K562 (cell line): ENCODE measurements at regions of chr3 and their contacts with region 1.

Region 1: GRCh38 chr3:149129326-149130205 is at the start of gene HPS3:
- DNase-seq: peak; percentile 89 to 94 (median 90)
- ATAC-seq: peak; percentile 98
- H3K4me3 ChIP-seq: peak within 1 kb of the TSS; percentile 77
- H3K27ac ChIP-seq: peak within 1 kb of the TSS; percentile 20
- H3K4me1 ChIP-seq: peaks cover 5 to 12% of the 10 kb centered on the region in 2 experiments; a peak in 3 of 5 replicates
- H3K27me3 ChIP-seq: peaks cover 0 to 13% of the 10 kb centered on the region in 2 experiments; a peak in 3 of 5 replicates
- CTCF ChIP-seq: no peak
- EP300 ChIP-seq: no peak
- POLR2A ChIP-seq: peak; percentile 80
- RAD21 ChIP-seq: no peak
- polyA plus RNA-seq, gene HPS3: 1.2 to 2.1 TPM

Region 2: DNA sequence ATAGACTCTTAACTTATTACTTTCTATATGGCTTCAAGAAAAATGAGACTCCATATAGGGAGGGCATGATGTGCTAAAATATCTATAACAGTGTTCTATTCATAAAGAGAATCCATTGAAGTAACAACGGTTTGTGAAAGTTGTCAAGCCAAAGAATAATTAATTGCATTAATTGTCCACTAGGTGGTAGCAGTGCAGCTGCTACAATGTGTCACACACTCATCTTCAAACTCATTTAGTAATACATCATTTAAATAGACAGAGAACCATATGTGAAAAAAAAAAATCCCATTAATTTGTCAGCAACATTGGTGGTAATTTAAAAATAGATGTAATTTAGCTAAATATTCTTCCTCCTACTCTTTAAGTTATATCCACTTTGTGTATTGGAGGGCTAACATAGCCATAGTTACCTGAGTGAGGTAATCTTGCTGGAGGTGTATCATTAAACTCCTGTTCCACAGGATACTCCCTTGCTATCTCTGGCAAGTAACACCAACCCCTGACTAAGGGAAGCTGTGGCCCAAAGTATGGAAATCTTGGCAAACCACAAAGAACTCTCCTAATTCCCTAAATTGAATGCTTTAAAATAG is 268.2 kb before region 1 on chr3:
- CTCF ChIA-PET with region 1: no interaction called
- POLR2A ChIA-PET with region 1: no interaction called
- in situ Hi-C with region 1: no loop called
- intact Hi-C with region 1: loop called (anchors 10 kb)
- DNase-seq: peak; percentile 31 to 52 (median 50)
- ATAC-seq: peak; percentile 69
- H3K4me3 ChIP-seq: no peak overlapping the region
- H3K27ac ChIP-seq: no peak overlapping the region
- H3K4me1 ChIP-seq: no peaks in the 10 kb centered on the region
- H3K27me3 ChIP-seq: no peaks in the 10 kb centered on the region
- CTCF ChIP-seq: peak in 2 of 3 experiments; percentile 40 to 68; a peak in 4 of 6 replicates
- EP300 ChIP-seq: no peak
- POLR2A ChIP-seq: no peak
- RAD21 ChIP-seq: peak; percentile 65 to 70

Region 3: GRCh38 chr3:149188494-149188893 is 58.9 kb after region 1 on chr3:
- CTCF ChIA-PET with region 1: no interaction called
- POLR2A ChIA-PET with region 1: no interaction called
- in situ Hi-C with region 1: no loop called
- intact Hi-C with region 1: loop called (anchors 5 kb)
- DNase-seq: no peak
- ATAC-seq: no peak
- H3K4me3 ChIP-seq: no peak overlapping the region
- H3K27ac ChIP-seq: no peak overlapping the region
- H3K4me1 ChIP-seq: no peaks in the 10 kb centered on the region
- H3K27me3 ChIP-seq: peaks cover 4 to 5% of the 10 kb centered on the region in 2 experiments; a peak in 3 of 5 replicates
- CTCF ChIP-seq: no peak
- EP300 ChIP-seq: no peak
- POLR2A ChIP-seq: no peak
- RAD21 ChIP-seq: no peak